Activated B cell treated with CpG ODN at 0.5 μM for 24 hours (primary cell): ENCODE measurements at regions of chr3 and their contacts with region 1.

Region 1: GRCh38 chr3:39126532-39127071 is 19.1 kb downstream of the TTC21A start:
- DNase-seq: no peak
- ATAC-seq: peak; percentile 38
- H3K4me3 Mint-ChIP-seq: peak overlapping the region; percentile 1
- H3K27ac Mint-ChIP-seq: no peak overlapping the region
- H3K4me1 Mint-ChIP-seq: peaks cover 58% of the 10 kb centered on the region
- H3K27me3 Mint-ChIP-seq: no peaks in the 10 kb centered on the region
- CTCF ChIP-seq: no peak

Region 2: GRCh38 chr3:39086144-39086543 is 40.5 kb before region 1 on chr3:
- CTCF ChIA-PET with region 1: no interaction called
- POLR2A ChIA-PET with region 1: no interaction called
- intact Hi-C with region 1: no loop called
- DNase-seq: no peak
- ATAC-seq: peak; percentile 92
- H3K4me3 Mint-ChIP-seq: peak overlapping the region; percentile 37
- H3K27ac Mint-ChIP-seq: peak overlapping the region; percentile 67
- H3K4me1 Mint-ChIP-seq: peaks cover 25% of the 10 kb centered on the region
- H3K27me3 Mint-ChIP-seq: no peaks in the 10 kb centered on the region
- CTCF ChIP-seq: no peak

Region 3: DNA sequence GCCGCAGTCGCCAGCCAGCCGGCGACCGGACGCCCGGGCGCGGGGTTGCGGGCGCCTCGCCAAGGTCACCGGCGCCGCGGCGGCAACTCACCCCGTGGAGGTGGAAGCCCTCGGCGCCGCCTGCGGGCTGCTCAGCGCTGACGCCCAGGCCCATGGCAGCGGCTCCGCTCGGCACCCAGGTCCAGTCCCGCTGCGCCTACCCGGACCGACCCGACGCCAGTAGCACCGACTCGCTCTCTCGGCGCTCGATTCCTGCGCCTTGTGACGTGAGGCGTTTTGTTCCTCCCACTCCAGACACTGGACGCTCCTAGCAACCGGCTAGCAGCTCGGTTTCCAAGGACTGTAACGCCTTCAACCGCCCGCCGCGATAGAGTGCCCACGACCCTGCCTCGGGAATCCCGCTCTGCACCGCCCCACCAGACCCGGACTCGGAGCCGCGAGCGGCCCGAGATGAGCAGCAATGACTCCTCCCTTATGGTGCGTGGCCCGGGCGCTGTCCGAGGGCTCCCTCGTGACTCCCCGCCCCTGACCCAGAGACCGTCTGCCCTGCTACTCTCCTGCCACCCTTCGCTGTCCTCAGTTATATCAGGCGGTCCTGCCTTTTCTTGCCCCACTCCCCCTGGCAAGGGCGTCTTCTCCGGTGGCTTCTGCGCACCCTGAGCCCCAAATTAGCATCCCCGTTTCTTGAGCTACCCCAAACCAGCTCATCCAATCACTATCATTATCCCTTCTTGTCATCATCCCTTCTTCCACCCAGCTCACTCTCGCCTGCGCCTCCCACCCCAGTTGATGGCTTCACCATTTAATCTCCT is 19.0 kb before region 1 on chr3 and contains the starts of genes GORASP1 and TTC21A:
- CTCF ChIA-PET with region 1: no interaction called
- POLR2A ChIA-PET with region 1: interaction called, 9 read pairs
- intact Hi-C with region 1: loop called (anchors 1 kb)
- DNase-seq: peak; percentile 64
- ATAC-seq: peak; percentile 50
- H3K4me3 Mint-ChIP-seq: peak within 1 kb of the TSS; percentile 98
- H3K27ac Mint-ChIP-seq: peak within 1 kb of the TSS; percentile 91
- H3K4me1 Mint-ChIP-seq: peaks cover 62% of the 10 kb centered on the region
- H3K27me3 Mint-ChIP-seq: no peaks in the 10 kb centered on the region
- CTCF ChIP-seq: no peak
- total RNA-seq, gene GORASP1: 41.6 and 47.8 TPM in 2 replicates
- total RNA-seq, gene TTC21A: 11.4 and 15.9 TPM in 2 replicates

Region 4: GRCh38 chr3:39146984-39147591 is 20.5 kb after region 1 on chr3:
- CTCF ChIA-PET with region 1: interaction called, 4 read pairs
- POLR2A ChIA-PET with region 1: interaction called, 42 read pairs
- intact Hi-C with region 1: no loop called
- DNase-seq: no peak
- ATAC-seq: peak; percentile 53
- H3K4me3 Mint-ChIP-seq: peak overlapping the region; percentile 98
- H3K27ac Mint-ChIP-seq: peak overlapping the region; percentile 99
- H3K4me1 Mint-ChIP-seq: peaks cover 81% of the 10 kb centered on the region
- H3K27me3 Mint-ChIP-seq: no peaks in the 10 kb centered on the region
- CTCF ChIP-seq: no peak

Region 5: DNA sequence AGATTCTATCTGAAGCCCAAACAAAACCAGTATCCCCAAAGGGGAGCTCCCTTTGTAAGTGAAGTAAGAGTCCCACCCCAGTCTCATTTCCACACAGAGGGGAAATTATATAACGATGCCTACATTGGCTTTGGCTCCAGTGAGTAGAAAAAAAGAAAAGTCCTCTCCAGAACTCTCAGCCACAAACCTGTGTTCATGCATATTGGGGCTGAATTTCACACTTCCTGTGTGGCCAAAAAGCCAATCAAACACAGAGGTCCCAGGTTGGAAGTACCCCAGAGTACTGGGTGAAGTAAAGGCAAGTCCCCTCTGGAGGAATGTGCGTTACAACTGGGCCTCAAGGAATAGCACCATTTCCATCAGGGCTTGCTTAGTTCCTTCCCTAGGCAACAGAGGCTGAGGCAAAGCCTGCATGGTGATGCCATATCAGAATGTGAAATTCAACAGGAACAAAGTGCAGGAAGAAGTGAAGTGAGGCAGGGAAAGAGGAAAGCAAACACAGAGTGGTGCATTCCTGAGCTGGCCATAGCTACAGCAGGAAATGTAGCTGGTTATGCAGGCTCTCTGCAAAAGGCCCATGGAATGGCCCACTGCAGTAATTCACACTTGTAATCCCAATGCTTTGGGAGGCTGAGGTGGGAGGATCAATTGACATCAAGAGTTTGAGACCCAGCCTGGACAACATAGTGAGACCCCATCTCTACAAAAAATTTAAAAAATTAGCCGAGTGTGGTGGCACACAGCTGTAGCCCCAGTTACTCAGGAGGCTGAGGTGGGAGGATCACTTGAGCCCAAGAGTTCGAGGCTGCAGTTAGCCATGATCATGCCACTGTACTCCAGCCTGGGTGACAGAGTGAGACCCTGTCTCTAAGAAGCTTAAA is 169.8 kb after region 1 on chr3:
- CTCF ChIA-PET with region 1: interaction called, 26 read pairs
- POLR2A ChIA-PET with region 1: interaction called, 10 read pairs
- intact Hi-C with region 1: no loop called
- DNase-seq: no peak
- ATAC-seq: no peak
- H3K4me3 Mint-ChIP-seq: no peak overlapping the region
- H3K27ac Mint-ChIP-seq: no peak overlapping the region
- H3K4me1 Mint-ChIP-seq: peaks cover 4% of the 10 kb centered on the region
- H3K27me3 Mint-ChIP-seq: peaks cover 23% of the 10 kb centered on the region
- CTCF ChIP-seq: no peak